ENCODE measurements at regions of chr11 and their contacts with region 1.

Region 1: DNA sequence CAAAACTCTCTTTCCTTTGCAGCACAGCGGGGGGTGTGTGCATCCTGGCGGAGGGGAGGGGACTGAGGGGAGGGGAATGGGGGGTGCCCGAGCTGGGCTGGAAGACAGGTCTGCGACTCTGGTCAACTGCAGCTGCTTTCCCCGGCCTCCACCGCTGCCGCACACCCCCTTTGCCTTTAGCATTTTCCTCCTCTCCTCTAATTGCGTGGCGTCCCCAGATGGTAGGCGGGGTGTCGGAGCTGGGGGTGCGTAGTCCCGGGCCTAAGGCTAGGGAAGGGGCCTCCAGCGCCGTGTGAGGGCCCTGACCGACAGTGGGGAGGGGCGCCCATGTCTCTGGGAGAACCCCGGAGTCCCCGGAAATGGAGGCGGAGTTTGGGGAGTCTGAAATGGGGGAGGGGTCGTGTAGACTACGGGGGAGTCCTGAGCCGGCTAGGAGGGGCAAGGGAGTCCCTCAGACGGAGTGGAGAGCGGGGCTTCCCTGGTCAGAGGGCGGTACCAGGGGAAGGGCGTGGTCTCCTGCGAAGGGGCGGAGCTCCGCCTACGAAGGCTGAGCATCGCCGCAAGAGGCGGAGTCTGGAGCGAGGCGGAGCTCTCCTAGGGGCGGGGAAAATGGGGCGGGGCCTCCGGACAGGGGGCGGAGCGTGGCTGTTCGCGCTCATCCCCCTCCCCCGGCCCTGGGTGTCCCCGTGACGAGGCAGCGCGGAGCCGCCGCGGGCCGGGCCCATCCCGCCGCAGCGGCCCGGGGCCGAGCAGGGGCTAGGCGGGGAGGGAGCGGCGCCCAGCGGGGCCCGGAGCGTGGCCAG is at the start of gene PELI3:
- DNase-seq: peak; percentile 98
- ATAC-seq: peak; percentile 88
- H3K4me3 Mint-ChIP-seq: peak within 1 kb of the TSS; percentile 85
- H3K27ac Mint-ChIP-seq: peak within 1 kb of the TSS; percentile 79
- H3K4me1 Mint-ChIP-seq: peaks cover 38% of the 10 kb centered on the region
- H3K27me3 Mint-ChIP-seq: no peaks in the 10 kb centered on the region
- total RNA-seq, gene PELI3: 5.7 to 7.0 TPM

Region 2: DNA sequence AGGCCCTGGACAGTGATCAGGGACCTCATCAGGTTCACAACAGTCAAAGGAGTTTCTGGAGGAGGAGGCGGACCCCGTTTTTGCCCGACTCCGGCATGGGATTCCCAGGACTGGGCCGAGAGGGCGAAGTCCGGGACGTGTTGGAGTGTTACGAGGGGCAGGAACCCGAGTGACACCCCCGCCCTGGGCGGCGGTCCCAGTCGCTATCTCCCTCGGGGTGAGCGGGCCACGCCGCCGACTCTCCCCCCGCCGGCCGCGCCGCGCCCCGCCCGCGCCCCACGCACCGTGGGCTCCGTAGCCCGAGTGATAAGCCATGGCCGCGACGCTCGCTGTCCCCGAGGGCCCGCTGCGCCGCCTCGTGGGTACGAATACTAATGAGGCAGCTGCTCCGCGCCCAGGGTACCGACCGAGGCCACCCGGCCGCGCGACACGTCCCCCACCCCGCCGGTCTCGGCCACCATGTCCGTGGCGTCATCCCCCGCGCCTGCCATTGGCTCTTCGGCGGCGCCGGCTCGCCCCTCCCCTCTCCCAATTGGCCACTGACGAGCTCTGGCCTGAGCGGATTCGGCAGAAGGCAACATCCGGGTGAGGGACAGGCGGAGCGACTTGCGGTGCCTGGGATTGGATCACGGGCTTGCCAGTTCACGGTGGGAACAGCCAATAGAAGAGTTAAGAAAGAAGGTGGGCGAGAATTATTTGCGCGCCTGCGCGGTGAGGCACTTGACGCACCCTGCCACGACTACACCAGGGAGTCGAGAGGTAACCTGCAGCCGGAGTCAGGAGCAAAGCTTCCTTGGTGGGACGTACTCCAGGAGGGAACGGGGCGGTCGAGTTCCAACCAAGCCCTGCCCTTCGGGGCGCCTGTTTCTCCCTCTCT is 177.5 kb before region 1 on chr11 and contains the start of gene YIF1A:
- CTCF ChIA-PET with region 1: no interaction called
- POLR2A ChIA-PET with region 1: interaction called, 3 read pairs
- intact Hi-C with region 1: loop called in 1 of 2 experiments (anchors 1 kb)
- DNase-seq: peak; percentile 99
- ATAC-seq: peak; percentile 97
- H3K4me3 Mint-ChIP-seq: peak within 1 kb of the TSS; percentile 89
- H3K27ac Mint-ChIP-seq: peak within 1 kb of the TSS; percentile 85
- H3K4me1 Mint-ChIP-seq: peaks cover 22% of the 10 kb centered on the region
- H3K27me3 Mint-ChIP-seq: peaks cover 8% of the 10 kb centered on the region
- total RNA-seq, gene YIF1A: 47.5 to 49.8 TPM

Region 3: DNA sequence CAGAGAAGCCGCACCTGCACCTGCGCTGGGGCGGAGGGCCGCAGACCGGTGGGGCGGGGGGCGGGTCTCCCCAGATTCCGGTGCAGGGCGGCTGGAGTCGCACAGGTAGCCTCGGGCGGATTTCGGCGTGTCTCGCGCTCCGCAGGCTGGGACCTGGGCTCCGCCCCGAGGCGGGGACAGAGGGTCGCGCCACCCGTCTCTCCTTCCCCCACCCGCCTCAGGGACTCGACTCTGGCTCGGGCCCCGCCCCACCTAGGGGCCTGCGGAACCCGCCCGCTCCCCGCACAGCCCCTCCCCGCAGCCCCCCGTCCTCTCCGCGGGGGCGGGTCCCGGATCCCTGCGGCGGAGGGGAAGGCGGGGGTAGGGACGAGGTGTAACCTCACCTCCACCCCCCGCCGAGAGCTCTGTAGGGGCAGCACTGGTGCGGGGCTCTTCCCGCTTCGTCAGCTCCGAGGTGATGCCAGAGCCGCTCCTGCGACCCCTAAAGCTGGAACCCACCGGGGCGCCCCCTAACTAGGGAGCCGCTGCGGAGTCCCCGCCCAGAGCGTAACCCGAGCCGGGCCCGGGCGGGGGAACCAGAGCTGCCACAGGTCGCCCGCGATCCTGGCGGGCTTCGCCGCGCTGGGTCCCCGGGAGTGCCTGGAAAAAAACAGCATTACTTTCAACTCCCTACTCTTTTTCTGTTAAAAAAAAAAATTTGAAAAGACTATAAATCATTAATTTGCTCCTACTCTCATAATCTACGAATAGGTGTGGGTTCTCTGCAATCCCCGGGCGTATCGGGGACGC is 94.6 kb before region 1 on chr11 and contains the start of gene SLC29A2:
- CTCF ChIA-PET with region 1: no interaction called
- POLR2A ChIA-PET with region 1: no interaction called
- intact Hi-C with region 1: loop called in 1 of 2 experiments (anchors 1 kb)
- DNase-seq: peak; percentile 92
- ATAC-seq: peak; percentile 87
- H3K4me3 Mint-ChIP-seq: peak within 1 kb of the TSS; percentile 91
- H3K27ac Mint-ChIP-seq: peak within 1 kb of the TSS; percentile 91
- H3K4me1 Mint-ChIP-seq: peaks cover 19% of the 10 kb centered on the region
- H3K27me3 Mint-ChIP-seq: no peaks in the 10 kb centered on the region
- total RNA-seq, gene SLC29A2: 13.6 to 14.4 TPM

Region 4: GRCh38 chr11:66421492-66422205 is 44.8 kb before region 1 on chr11:
- CTCF ChIA-PET with region 1: interaction called, 3 read pairs
- POLR2A ChIA-PET with region 1: no interaction called
- intact Hi-C with region 1: loop called in 1 of 2 experiments (anchors 1 kb)
- DNase-seq: peak; percentile 93
- ATAC-seq: peak; percentile 40
- H3K4me3 Mint-ChIP-seq: no peak overlapping the region
- H3K27ac Mint-ChIP-seq: no peak overlapping the region
- H3K4me1 Mint-ChIP-seq: peaks cover 30% of the 10 kb centered on the region
- H3K27me3 Mint-ChIP-seq: peaks cover 35% of the 10 kb centered on the region

Region 5: GRCh38 chr11:66510271-66510989 is 44.0 kb after region 1 on chr11 and contains the start of gene BBS1:
- CTCF ChIA-PET with region 1: no interaction called
- POLR2A ChIA-PET with region 1: interaction called, 3 read pairs
- intact Hi-C with region 1: loop called in 1 of 2 experiments (anchors 1 kb)
- DNase-seq: peak; percentile 88
- ATAC-seq: peak; percentile 98
- H3K4me3 Mint-ChIP-seq: peak within 1 kb of the TSS; percentile 86
- H3K27ac Mint-ChIP-seq: peak within 1 kb of the TSS; percentile 48
- H3K4me1 Mint-ChIP-seq: peaks cover 10% of the 10 kb centered on the region
- H3K27me3 Mint-ChIP-seq: no peaks in the 10 kb centered on the region
- total RNA-seq, gene BBS1: 9.4 to 10.7 TPM

Region 6: DNA sequence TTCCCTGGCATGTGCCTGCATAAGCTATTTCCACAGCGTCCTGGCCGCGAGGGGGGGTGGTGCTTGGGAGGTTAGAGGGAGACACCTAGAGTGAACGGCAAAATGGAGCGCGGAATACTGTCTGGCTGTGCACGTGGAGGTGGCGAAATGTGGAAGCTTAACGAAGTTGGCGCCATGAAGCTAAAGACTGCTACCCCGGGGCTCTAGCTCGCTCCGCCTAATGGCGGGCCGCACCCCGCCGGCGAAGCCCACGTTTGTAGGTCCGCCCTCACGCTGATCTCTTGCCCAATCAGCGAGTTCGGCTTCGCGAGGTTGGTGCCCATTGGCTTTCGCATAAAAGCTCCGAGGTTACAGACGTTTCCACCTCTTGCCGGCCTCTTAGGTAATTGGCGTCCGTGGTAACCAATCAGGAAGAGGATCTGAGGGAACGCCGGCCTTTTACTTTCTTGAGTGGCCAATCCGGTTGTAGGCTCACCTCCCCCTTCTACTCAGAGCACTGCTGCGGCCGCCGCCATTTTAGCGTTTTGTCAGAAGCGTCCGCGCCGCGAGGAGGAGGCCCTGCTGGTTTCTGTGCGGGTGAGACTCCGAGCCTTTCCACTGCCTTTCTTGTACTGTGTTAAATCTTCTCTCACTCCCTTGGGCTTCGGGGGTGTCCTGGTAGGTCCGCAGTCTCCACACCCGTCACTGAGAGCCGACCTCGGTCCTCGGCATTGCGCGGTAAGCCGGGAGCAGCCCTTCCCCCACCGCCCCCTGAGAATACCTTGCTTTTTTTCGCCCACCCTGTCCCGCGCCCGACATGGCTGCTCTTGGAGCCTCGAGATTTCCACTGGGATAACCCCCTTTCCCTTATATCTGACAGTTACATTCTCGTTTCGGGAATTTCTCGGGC is 172.0 kb after region 1 on chr11 and contains the start of gene RBM4:
- CTCF ChIA-PET with region 1: no interaction called
- POLR2A ChIA-PET with region 1: no interaction called
- intact Hi-C with region 1: loop called in 1 of 2 experiments (anchors 2 kb)
- DNase-seq: peak; percentile 97
- ATAC-seq: peak; percentile 95
- H3K4me3 Mint-ChIP-seq: peak within 1 kb of the TSS; percentile 89
- H3K27ac Mint-ChIP-seq: peak within 1 kb of the TSS; percentile 97
- H3K4me1 Mint-ChIP-seq: peaks cover 65% of the 10 kb centered on the region
- H3K27me3 Mint-ChIP-seq: no peaks in the 10 kb centered on the region
- total RNA-seq, gene RBM4: 104 to 122 TPM